Posterior cingulate gyrus (tissue), 11 donors: ENCODE measurements at regions of chr1 and their contacts with region 1.

Region 1: GRCh38 chr1:47710329-47711071 is 272.7 kb downstream of the FOXD2 start:
- DNase-seq: peak; percentile 42 to 95 (median 78)

Region 2: DNA sequence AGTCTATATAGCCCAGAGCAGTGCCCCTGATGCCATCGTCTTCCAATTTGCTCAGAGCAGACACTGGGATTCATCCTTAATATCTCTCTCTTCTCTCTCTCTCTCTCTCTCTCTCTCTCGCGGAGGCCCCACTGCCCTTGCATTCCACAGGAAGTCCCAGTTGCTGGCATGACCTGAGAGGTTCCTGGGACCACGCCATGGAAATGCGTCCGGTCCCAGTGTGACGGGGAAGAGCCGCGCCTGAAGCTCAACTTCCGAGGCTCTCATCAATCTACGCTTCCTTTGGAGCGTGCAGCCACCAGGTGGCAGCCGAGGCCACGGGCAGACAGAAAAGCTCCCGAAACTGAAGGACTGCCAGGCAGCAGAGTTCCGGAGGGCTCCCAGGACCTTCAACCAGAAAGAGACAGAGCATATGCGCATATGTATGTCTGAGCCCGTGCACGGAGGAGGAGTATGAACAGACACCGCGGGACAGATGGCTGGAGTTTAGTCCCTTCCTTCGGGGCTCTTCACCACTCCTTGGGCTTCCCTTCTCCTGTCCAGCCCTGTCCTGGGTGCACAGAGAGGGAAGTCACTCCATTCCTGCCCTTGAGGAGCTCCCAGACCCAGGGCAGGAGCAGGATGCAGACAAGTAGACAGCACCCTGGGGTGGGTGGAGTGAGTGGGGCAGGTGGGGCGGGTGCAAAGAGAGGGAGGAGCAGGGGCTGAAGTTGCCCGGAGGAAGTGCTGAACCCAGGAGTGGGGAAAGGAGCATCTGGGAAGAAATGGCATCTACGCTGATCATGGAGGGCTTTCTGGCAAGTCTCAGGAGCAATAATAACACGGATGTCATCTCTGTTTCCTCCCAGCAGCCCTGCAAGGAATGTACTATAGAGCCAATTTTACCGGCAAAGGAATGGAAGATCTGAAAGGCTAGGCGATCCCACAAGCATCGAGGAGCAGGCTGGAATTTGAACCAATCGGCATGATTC is 531.2 kb before region 1 on chr1:
- intact Hi-C with region 1: loop called (anchors 5 kb)
- DNase-seq: peak; percentile 74 to 98 (median 86)

Region 3: DNA sequence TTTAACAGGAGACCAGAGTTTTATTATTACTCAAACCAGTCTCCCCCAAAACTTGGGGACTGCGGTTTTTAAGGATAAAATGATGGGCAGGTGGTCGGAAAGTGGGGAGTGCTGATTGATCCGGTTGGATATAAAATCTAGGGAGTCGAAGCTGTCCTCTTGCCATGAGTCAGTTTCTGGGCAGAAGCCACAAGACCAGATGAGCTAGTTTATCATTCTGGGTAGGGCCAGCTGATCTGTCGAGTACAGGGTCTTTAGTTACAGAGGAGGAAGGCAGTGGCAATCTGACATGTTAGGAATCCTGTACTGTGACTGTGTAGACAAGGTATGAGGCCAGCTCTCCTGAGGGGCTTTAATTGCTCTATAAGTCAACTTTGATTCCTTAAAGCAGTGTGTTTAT is 317.4 kb before region 1 on chr1:
- intact Hi-C with region 1: loop called (anchors 5 kb)
- DNase-seq: no peak

Region 4: GRCh38 chr1:47432071-47433036 is 278.1 kb before region 1 on chr1:
- intact Hi-C with region 1: loop called (anchors 1 kb)
- DNase-seq: peak; percentile 32 to 95 (median 75)

Region 5: GRCh38 chr1:47527658-47528255 is 182.7 kb before region 1 on chr1:
- intact Hi-C with region 1: loop called (anchors 5 kb)
- DNase-seq: peak in 1 of 10 donors; percentile 18

Region 6: GRCh38 chr1:48048064-48048463 is 337.6 kb after region 1 on chr1:
- intact Hi-C with region 1: no loop called
- DNase-seq: peak in 1 of 10 donors; percentile 29